ENCODE measurements at regions of chr12 and their contacts with region 1.

Region 1: DNA sequence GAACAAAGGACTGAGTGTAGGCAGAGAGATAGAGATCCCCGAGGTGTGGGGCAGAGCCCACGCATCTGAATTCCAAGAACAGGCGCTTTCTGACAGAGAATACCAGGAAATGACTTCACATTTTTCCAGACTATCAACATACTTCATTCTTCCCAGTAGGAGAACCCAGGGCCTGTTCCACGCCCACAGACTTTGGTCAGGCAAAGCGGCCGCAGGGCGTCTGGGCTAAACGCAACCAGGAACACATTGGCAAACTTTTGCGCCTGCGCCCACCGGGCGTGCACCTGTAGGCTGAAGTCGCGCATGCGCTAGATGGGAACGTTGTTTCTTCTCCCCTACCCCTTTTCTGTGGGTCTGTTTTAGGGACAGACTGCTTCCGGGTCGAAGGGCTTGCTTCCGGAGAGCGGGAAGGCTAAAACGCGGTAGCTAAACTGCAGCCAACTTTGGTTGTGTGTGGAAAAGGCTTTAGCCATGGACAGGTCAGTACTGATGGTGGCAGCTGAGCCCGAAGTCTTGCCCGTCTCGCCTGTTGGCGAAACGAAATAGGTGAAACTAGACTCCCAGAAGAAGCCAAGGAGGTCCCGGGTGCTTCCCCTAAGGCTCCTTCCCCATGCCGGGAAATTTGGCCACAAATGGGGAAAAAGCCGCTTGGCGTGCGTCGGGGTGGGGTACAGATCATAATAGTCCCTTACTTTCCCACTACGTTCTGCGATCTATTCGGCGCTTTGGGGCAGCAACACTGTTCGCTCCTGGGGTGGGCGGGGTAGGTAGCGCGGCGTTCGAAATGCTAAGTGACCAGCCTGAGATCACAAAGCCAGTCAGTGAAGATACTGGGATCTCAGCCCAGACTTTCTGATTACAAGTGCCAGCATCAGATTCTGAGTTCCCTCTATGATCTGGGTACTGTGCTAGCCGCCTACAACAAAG is at the start of gene NUP107:
- DNase-seq: peak; percentile 99 to 100 (median 100)
- ATAC-seq: peak; percentile 98 to 99
- H3K4me3 ChIP-seq: peak within 1 kb of the TSS; percentile 59
- H3K27ac ChIP-seq: peak within 1 kb of the TSS; percentile 87
- H3K4me1 ChIP-seq: no peaks in the 10 kb centered on the region
- H3K27me3 ChIP-seq: no peaks in the 10 kb centered on the region
- total RNA-seq, gene NUP107: 21.8 to 30.3 (median 25.6) TPM

Region 2: DNA sequence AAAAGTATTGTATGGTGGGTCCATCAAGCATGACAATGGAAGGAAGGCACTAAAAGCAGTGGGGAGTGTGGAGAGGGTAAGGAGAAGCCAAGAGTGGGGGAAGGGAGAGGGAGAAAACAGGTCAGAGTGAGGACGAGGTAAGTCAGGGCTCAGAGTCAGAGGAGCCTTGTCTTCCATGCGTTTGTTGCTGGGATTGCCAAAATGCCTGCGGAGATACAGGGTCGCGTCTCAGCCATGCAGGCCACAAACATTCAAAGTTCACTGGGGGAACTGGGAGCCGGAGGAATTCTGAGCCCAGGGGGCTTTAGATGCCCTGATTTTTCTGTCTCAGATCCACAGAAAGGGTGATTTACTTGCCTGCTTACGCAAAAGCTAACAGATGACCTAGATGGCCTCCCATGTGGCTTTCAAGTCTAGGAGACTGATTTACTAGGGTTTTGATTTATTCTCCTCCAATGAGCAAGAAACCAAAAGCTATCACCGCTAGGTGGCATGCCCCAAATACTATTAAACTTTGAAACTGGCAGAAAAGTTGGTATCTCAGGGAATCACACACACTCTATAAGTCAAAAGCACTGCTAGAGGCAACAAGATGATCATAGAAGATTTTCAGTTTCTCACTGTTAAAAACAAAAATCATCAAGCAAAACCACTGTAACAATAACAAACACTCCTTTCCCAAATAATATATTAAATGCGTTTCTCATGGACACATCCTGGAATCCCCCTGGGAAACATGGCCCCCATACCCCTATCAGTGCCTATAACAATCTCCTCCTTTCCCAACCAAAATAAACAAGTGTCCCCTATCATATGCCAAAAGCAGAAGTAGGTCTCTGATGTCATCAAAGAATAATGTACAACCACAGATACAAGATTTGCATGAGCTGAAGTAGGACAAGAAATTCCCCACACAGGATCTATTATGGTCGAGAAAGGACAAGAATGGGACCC is 328.0 kb before region 1 on chr12:
- intact Hi-C with region 1: loop called in 3 of 4 experiments (anchors 10 kb)
- DNase-seq: peak in 2 of 3 donors; percentile 35 to 58
- ATAC-seq: peak; percentile 79 to 87
- H3K4me3 ChIP-seq: no peak overlapping the region
- H3K27ac ChIP-seq: no peak overlapping the region
- H3K4me1 ChIP-seq: peaks cover 3% of the 10 kb centered on the region
- H3K27me3 ChIP-seq: no peaks in the 10 kb centered on the region

Region 3: DNA sequence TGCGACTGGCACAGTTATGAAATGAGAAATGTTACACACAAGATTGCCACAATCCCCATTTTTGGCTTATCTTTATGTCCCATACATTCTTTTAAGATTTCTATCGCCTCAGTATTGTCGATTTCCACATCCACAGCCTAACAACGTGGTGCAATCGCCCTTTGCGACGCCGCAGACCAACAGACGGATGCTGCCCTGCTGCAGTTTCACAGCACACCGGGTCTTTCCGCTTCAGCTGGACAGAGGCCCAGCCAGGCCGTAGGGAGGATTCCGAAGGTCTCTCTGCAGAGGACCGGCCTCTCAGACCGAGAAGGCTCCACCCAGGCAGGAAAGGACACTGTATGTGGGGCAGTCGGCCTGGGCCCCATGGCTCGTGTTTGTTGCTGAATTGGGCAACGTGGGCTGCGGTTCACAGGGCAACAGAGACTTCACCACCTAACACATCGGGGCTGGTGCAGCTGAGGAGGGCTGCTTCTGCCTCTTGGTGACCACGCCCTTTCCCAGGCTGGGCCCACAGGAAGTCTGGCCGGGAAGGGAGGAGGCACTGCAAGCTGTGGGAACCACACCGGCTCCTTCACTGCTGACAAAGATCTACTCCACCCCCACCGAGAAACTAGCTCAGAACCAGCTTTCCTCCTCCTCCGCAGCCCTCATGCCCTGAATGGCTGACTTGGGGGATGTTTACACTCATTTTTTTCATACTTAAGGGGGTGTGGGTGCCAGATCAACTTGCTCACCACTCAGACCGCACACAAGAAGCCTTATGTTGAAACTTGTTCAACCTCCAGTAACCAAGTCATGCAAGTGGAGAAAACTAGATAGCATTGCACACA is 321.7 kb before region 1 on chr12:
- intact Hi-C with region 1: loop called in 1 of 4 experiments (anchors 10 kb)
- DNase-seq: peak; percentile 95 to 96 (median 96)
- ATAC-seq: peak; percentile 98 to 99
- H3K4me3 ChIP-seq: peak overlapping the region; percentile 20
- H3K27ac ChIP-seq: peak overlapping the region; percentile 86
- H3K4me1 ChIP-seq: no peaks in the 10 kb centered on the region
- H3K27me3 ChIP-seq: no peaks in the 10 kb centered on the region